H1 (cell line): ENCODE measurements at regions of chr10 and their contacts with region 1.

Region 1: DNA sequence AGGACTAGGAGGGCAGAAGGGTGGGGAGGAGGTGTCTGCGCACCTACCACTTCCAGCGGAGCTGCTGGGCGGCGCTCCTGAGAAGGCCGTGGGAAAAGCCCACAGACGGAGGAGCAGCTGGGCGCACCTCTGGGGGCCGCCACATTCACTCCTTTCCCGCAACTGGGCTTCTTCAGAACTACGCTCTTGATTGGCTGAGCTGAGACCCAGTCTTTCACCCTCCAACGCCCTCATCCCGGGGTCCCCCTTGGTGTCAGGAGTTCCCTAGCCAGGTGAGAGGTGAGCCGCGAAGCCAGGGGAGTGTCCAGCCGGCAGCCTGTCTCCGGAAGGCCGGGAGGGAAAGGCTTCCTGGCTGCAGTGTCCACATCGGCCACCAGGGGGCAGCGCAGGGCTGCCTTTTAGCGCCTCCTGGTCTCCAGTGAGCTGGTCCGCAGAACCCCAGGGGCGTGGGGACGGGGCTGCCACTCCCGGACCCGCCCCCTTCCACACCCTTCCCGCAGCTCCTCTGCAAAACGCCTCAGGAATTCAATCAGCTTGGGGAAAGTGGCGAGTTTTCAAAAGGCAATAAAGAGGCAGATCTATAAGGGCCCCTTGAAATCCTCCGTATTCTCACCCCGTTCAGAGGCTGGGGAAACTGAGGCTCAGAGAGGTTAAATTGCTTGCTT is 98.8 kb downstream of the CHST15 start:
- DNase-seq: peak; percentile 82 to 100
- H3K4me3 ChIP-seq: peak overlapping the region; percentile 8 to 59 (median 41); a peak in 7 of 8 replicates
- H3K27ac ChIP-seq: no peak overlapping the region
- H3K4me1 ChIP-seq: peaks cover 0 to 12% (median 3%) of the 10 kb centered on the region in 4 experiments; a peak in 5 of 7 replicates
- H3K27me3 ChIP-seq: peaks cover 0 to 14% (median 10%) of the 10 kb centered on the region in 4 experiments; a peak in 6 of 7 replicates
- CTCF ChIP-seq: peak; percentile 95 to 97 (median 96)
- EP300 ChIP-seq: peak in 1 of 2 experiments; percentile 25; a peak in 1 of 3 replicates
- POLR2A ChIP-seq: no peak
- RAD21 ChIP-seq: peak; percentile 94 to 95

Region 2: DNA sequence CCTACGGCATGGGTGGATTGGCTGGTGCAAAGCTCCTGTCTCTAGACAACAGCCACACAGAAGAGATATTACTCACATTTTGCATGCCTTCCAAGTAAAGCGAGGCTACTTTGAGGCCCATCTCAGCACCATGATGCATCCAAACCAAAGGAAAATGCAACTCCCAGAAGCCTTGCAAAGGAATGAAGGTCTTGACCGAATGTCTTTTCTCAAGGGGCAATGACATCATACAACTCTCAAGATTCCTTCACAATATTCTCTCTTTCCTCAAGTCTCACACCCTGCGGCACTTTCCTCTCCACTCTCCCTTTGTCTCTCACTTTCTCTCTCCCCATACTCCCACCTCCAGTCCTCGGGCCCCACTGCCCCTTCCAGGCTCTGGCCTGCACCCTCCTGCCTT is 58.1 kb before region 1 on chr10:
- CTCF ChIA-PET with region 1: no interaction called
- POLR2A ChIA-PET with region 1: no interaction called
- DNase-seq: no peak
- H3K4me3 ChIP-seq: no peak overlapping the region
- H3K27ac ChIP-seq: no peak overlapping the region
- H3K4me1 ChIP-seq: no peaks in the 10 kb centered on the region
- H3K27me3 ChIP-seq: 0 out of 7 replicates have a peak, but pooled peaks cover 0 to 2% (median 0%) of the 10 kb centered on the region in 4 experiments
- CTCF ChIP-seq: no peak
- EP300 ChIP-seq: no peak
- POLR2A ChIP-seq: no peak
- RAD21 ChIP-seq: no peak

Region 3: DNA sequence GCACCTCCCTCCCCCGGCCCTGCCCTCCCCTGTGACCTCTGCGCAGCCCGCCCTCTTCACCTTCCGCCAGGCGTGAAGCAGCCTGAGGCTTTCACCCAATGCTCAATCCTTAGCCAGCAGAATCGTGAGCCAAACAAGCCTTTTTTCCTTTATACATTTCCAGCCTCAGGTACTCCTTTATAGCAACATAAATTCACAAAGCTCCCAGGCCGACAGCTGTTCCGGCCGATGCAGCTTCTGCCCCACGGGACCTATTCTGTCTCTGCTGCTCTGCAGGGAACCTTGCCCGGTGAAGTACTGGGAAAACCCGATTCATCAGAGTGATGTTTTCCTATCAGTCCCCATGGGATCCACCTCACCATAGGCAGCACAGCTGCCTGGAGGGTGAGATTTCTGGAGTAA is 11.4 kb after region 1 on chr10:
- CTCF ChIA-PET with region 1: interaction called, 18 read pairs
- POLR2A ChIA-PET with region 1: no interaction called
- DNase-seq: no peak
- H3K4me3 ChIP-seq: no peak overlapping the region
- H3K27ac ChIP-seq: no peak overlapping the region
- H3K4me1 ChIP-seq: peaks cover 0 to 9% (median 6%) of the 10 kb centered on the region in 4 experiments; a peak in 4 of 7 replicates
- H3K27me3 ChIP-seq: no peaks in the 10 kb centered on the region
- CTCF ChIP-seq: no peak
- EP300 ChIP-seq: no peak
- POLR2A ChIP-seq: no peak
- RAD21 ChIP-seq: no peak

Region 4: GRCh38 chr10:124125447-124126116 is 131.0 kb after region 1 on chr10:
- CTCF ChIA-PET with region 1: interaction called, 12 read pairs
- POLR2A ChIA-PET with region 1: no interaction called
- DNase-seq: no peak
- H3K4me3 ChIP-seq: no peak overlapping the region
- H3K27ac ChIP-seq: no peak overlapping the region
- H3K4me1 ChIP-seq: no peaks in the 10 kb centered on the region; a peak in 2 of 7 replicates
- H3K27me3 ChIP-seq: peaks cover 0 to 2% (median 0%) of the 10 kb centered on the region in 4 experiments; a peak in 1 of 7 replicates
- CTCF ChIP-seq: peak; percentile 41 to 64 (median 48)
- EP300 ChIP-seq: no peak
- POLR2A ChIP-seq: no peak
- RAD21 ChIP-seq: peak; percentile 47 to 56

Region 5: GRCh38 chr10:124249812-124250432 is 255.4 kb after region 1 on chr10:
- CTCF ChIA-PET with region 1: interaction called, 29 read pairs
- POLR2A ChIA-PET with region 1: interaction called, 3 read pairs
- DNase-seq: peak in 1 of 2 experiments; percentile 58
- H3K4me3 ChIP-seq: no peak overlapping the region
- H3K27ac ChIP-seq: no peak overlapping the region
- H3K4me1 ChIP-seq: no peaks in the 10 kb centered on the region
- H3K27me3 ChIP-seq: no peaks in the 10 kb centered on the region; a peak in 2 of 7 replicates
- CTCF ChIP-seq: peak in 1 of 3 experiments; percentile 70; a peak in 2 of 4 replicates
- EP300 ChIP-seq: no peak
- POLR2A ChIP-seq: no peak
- RAD21 ChIP-seq: peak; percentile 36 to 38

Region 6: GRCh38 chr10:124289851-124290795 is 295.6 kb after region 1 on chr10:
- CTCF ChIA-PET with region 1: interaction called, 18 read pairs
- POLR2A ChIA-PET with region 1: no interaction called
- DNase-seq: no peak
- H3K4me3 ChIP-seq: no peak overlapping the region
- H3K27ac ChIP-seq: no peak overlapping the region
- H3K4me1 ChIP-seq: no peaks in the 10 kb centered on the region; a peak in 1 of 7 replicates
- H3K27me3 ChIP-seq: no peaks in the 10 kb centered on the region; a peak in 1 of 7 replicates
- CTCF ChIP-seq: no peak
- EP300 ChIP-seq: no peak
- POLR2A ChIP-seq: no peak
- RAD21 ChIP-seq: no peak

Region 7: DNA sequence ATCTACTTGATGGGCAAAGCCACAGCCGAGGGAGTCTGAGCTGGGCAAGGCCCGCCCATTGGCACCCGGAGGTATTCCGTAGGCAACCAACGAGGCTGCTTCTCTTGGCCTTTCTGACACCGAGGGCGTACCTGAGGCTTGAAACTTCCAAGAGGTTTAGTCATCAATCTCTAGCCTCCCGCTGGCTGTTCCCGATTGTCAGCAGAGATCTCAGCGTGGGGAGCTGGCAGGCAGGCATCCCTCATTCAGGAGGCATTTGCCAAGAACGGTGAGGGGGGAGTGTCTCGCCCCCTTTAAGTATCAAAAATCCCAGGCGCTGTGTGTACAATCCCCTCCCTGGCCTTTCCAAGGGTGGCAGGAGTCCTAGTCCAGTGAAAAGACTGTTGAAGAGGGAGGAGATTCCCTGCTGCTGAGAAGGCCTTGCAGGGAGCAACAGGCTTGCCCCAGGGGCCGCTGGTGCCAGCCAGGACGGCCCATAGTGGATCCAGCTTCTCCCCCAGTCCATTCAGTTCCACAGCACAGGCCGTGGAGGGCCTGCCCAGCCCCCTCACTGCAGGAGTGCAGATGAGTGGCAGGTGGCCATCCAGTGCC is 384.4 kb after region 1 on chr10:
- CTCF ChIA-PET with region 1: interaction called, 48 read pairs
- POLR2A ChIA-PET with region 1: no interaction called
- DNase-seq: no peak
- H3K4me3 ChIP-seq: no peak overlapping the region
- H3K27ac ChIP-seq: no peak overlapping the region
- H3K4me1 ChIP-seq: peaks cover 2 to 7% (median 5%) of the 10 kb centered on the region in 4 experiments; a peak in 6 of 7 replicates
- H3K27me3 ChIP-seq: no peaks in the 10 kb centered on the region; a peak in 1 of 7 replicates
- CTCF ChIP-seq: no peak
- EP300 ChIP-seq: no peak
- POLR2A ChIP-seq: no peak
- RAD21 ChIP-seq: no peak